Heart right ventricle (tissue), 16 donors: ENCODE measurements at regions of chr14 and their contacts with region 1.

Region 1: DNA sequence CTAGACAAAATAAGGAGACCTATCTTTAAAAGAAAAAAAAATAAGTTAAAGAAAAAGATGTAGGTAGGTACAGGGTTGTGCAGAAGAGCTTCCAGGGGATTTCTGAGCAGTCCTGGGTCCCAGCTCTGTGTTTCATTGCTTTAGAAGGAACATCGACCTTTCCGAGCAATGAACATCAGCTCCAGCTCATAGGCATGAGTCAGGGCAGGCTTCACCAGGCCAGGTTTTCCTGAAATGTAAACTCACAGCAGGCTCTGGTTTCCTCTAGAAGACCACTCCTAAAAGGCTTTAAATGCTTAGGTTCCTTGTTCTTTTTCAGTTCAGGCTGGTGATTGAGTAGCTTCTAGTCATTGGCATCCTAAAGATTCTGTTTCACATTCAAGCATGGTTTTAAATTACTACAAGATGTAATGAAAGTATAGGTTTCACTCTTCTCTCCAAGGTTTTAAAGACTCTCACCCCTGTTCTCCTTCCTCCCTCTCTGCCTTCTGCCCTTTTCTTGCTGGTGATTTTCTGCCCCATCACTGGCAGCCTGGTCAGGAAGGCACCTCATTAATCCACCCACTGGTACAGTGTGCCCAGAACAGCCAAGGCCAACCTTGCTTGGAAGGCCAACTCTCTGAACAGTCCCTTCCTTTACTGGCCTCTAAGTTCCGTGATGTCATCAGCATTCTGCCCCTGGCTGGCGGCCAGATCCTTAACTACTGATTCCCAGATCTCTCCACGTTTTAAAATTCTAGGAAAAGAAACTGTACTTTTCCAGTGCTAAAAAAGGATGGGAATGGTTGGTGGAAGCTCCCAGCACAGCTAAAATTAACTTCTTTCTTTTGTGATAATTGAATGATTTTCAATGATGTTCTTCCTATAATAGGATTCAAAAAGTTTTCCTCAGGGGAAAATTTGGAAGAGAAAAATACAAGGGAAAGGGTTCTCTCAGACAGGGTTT is 109.4 kb upstream of the HIF1A start:
- DNase-seq: peak; percentile 76 to 85
- ATAC-seq: peak; percentile 68 to 92 (median 84)
- H3K4me3 ChIP-seq: no peak overlapping the region
- H3K27ac ChIP-seq: peak overlapping the region; percentile 17 to 86 (median 61)
- H3K4me1 ChIP-seq: peaks cover 6 to 79% (median 42%) of the 10 kb centered on the region in 9 donors
- H3K27me3 ChIP-seq: no peaks in the 10 kb centered on the region
- CTCF ChIP-seq: no peak

Region 2: DNA sequence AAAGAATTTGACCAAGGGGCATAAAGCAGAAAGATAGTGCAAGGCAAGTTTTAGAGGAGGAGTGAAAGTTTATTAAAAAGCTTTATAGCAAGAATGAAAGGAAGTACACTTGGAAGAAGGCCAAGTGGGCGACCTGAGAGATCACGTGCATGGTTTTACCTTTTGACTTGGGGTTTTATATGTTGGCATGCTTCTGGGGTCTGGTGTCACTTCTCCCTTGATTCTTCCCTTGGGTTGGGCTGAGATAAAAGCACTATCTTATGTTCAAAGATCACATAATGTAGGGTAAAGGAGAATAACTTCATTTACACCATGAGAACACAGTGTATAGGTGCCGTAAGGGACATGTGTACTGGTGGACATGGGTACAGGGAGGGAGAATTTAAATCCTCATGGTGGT is 287.0 kb before region 1 on chr14:
- intact Hi-C with region 1: no loop called
- DNase-seq: no peak
- ATAC-seq: no peak
- H3K4me3 ChIP-seq: no peak overlapping the region
- H3K27ac ChIP-seq: no peak overlapping the region
- H3K4me1 ChIP-seq: peaks cover 0 to 9% (median 0%) of the 10 kb centered on the region in 9 donors
- H3K27me3 ChIP-seq: no peaks in the 10 kb centered on the region
- CTCF ChIP-seq: no peak

Region 3: DNA sequence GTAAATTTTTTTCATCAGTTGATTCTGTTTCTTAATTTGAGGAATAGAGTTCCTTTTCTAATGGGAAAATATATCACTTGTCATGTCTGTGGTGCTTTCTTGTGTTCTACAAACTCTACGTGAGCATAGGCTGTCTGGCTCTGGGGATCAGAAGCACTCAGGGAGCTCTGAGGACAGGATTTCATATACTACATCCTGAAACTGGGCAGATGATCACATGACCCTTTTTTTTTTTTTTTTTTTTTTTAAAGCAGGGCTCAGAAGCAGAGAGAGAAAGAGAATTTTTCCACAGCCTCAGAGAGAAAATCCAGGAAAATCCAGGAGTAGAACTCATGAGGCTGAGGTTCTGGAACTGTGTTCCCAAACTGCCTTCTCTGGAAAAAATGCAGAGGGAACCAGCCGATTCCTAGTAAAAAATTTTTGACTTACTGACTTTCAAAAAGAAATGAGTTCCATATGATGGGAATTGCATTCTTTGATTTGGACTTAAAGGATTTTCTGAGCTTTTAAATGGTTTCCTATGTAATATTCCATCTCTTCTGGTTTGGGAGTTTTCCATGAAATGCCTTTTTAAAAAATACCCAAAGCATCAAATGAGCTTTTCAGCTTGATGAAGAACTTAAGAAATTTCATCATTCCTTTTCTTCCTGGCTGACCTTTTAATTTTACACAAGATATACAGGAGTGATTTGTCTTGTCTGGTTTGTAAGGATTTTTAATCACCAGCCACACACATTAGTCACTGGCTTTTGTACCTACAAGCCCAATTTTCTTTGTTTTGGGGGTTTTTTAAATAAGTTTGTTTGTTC is 73.6 kb before region 1 on chr14:
- intact Hi-C with region 1: loop called in 1 of 10 experiments (anchors 5 kb)
- DNase-seq: no peak
- ATAC-seq: peak in 2 of 8 donors; percentile 36 to 52
- H3K4me3 ChIP-seq: no peak overlapping the region
- H3K27ac ChIP-seq: peak overlapping the region in 4 of 10 donors; percentile 10 to 62 (median 14)
- H3K4me1 ChIP-seq: peaks cover 9 to 84% (median 43%) of the 10 kb centered on the region in 9 donors
- H3K27me3 ChIP-seq: no peaks in the 10 kb centered on the region
- CTCF ChIP-seq: no peak

Region 4: DNA sequence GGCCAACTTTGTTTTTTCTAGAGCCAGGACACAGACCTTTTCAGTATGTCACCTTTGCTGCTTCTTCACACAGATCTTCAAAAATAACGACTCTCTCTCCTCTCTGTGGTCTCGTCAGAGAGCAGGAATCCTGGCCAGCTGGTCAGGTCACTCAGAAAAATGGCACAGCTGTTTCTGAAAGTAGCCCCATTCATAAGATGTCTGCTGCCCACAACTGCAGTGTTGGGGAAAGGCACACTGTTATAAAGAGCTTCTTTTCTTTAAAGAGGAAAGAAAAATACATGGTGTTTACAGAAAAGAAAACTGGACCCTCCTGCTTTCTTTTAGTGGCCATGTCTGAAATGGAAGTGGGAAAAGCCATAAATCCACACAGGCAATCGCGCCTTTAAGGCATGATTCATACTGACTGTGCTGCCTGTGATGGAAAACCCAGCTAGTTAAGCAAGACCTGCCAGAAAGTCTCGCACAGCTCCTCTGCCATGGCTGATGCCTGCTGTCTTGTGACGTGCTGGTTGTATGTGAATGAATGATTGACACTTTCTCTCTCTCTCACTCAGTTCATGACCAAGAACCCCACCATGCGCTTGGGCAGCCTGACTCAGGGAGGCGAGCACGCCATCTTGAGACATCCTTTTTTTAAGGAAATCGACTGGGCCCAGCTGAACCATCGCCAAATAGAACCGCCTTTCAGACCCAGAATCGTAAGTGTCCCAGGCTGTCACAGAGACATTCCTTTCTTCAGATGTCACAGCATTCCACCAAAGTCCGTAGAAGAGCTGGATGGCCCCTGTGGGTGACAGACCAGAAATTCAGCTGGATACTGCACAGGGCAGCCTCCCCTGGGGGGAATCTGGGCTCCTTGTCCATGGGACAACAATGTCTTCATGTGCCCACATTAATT is 38.4 kb before region 1 on chr14:
- intact Hi-C with region 1: no loop called
- DNase-seq: no peak
- ATAC-seq: peak in 1 of 8 donors; percentile 44
- H3K4me3 ChIP-seq: no peak overlapping the region
- H3K27ac ChIP-seq: peak overlapping the region in 5 of 10 donors; percentile 1 to 63 (median 14)
- H3K4me1 ChIP-seq: peaks cover 13 to 84% (median 53%) of the 10 kb centered on the region in 9 donors
- H3K27me3 ChIP-seq: no peaks in the 10 kb centered on the region
- CTCF ChIP-seq: no peak